ENCODE measurements at regions of chr2 and their contacts with region 1.

Region 1: GRCh38 chr2:156784020-156784701 is 348.0 kb downstream of the GPD2 start:
- DNase-seq: no peak
- H3K4me3 Mint-ChIP-seq: no peak overlapping the region
- H3K27ac Mint-ChIP-seq: no peak overlapping the region
- H3K4me1 Mint-ChIP-seq: no peaks in the 10 kb centered on the region
- H3K27me3 Mint-ChIP-seq: no peaks in the 10 kb centered on the region
- CTCF ChIP-seq: no peak

Region 2: DNA sequence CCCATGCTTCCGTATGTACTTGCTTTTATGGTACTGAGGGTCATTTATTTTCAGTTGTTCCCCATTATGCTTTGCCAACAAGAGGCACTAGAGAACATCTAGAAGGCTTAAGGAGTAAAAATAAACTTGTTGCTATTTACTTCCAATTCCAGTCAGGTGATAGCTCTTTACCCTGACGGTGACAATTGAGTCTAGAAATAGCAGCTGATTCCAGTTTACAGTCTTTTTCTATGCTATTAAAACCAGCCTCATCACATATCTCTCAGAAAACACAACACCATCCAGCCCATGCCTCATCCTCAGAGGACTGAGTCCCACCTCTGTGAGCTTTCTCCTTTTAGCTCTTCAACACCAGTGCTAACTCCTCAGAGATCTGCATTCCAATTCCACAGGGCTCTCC is 21.0 kb before region 1 on chr2:
- CTCF ChIA-PET with region 1: no interaction called
- intact Hi-C with region 1: no loop called
- DNase-seq: no peak
- H3K4me3 Mint-ChIP-seq: no peak overlapping the region
- H3K27ac Mint-ChIP-seq: no peak overlapping the region
- H3K4me1 Mint-ChIP-seq: no peaks in the 10 kb centered on the region
- H3K27me3 Mint-ChIP-seq: no peaks in the 10 kb centered on the region
- CTCF ChIP-seq: no peak

Region 3: DNA sequence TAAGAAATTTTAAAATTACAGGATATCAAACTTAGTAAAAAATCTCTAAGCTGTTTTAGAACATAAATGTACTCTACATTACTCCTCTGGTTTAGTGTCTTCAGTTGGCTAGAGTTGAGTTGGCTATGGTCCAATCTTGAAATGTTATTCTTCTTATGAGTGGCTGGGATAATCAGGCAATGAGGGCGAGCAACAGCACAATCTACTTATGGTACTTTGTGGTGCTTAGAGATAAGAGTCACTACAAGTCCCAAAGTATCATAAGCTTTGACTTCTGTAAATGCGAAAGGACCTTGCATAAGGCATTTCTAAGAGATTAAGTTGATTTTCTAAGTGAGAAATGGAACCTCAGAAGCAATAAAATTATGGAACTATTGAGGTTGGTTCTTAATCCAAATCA is 13.7 kb after region 1 on chr2:
- CTCF ChIA-PET with region 1: no interaction called
- intact Hi-C with region 1: loop called (anchors 1 kb)
- DNase-seq: no peak
- H3K4me3 Mint-ChIP-seq: no peak overlapping the region
- H3K27ac Mint-ChIP-seq: no peak overlapping the region
- H3K4me1 Mint-ChIP-seq: peaks cover 2% of the 10 kb centered on the region
- H3K27me3 Mint-ChIP-seq: no peaks in the 10 kb centered on the region
- CTCF ChIP-seq: no peak